B cell (primary cell): ENCODE measurements at regions of chr6 and their contacts with region 1.

Region 1: GRCh38 chr6:24494821-24495795 is at the start of gene ALDH5A1:
- DNase-seq: peak; percentile 85
- ATAC-seq: peak; percentile 67
- H3K4me3 ChIP-seq: peak within 1 kb of the TSS; percentile 41 to 82 (median 57)
- H3K4me3 Mint-ChIP-seq: peak within 1 kb of the TSS; percentile 90
- H3K27ac ChIP-seq: peak within 1 kb of the TSS; percentile 61 to 69
- H3K27ac Mint-ChIP-seq: peak within 1 kb of the TSS; percentile 94
- H3K4me1 ChIP-seq: peaks cover 17 to 18% of the 10 kb centered on the region in 2 donors
- H3K4me1 Mint-ChIP-seq: peaks cover 30% of the 10 kb centered on the region
- H3K27me3 ChIP-seq: no peaks in the 10 kb centered on the region
- H3K27me3 Mint-ChIP-seq: no peaks in the 10 kb centered on the region
- CTCF ChIP-seq: peak; percentile 46
- total RNA-seq, gene ALDH5A1: 26.3 and 28.3 TPM in 2 replicates

Region 2: GRCh38 chr6:24451581-24452388 is 43.3 kb before region 1 on chr6:
- CTCF ChIA-PET with region 1: no interaction called
- POLR2A ChIA-PET with region 1: no interaction called
- intact Hi-C with region 1: no loop called
- DNase-seq: no peak
- ATAC-seq: no peak
- H3K4me3 ChIP-seq: no peak overlapping the region
- H3K4me3 Mint-ChIP-seq: no peak overlapping the region
- H3K27ac ChIP-seq: no peak overlapping the region
- H3K27ac Mint-ChIP-seq: no peak overlapping the region
- H3K4me1 ChIP-seq: no peaks in the 10 kb centered on the region
- H3K4me1 Mint-ChIP-seq: no peaks in the 10 kb centered on the region
- H3K27me3 ChIP-seq: no peaks in the 10 kb centered on the region
- H3K27me3 Mint-ChIP-seq: no peaks in the 10 kb centered on the region
- CTCF ChIP-seq: no peak

Region 3: DNA sequence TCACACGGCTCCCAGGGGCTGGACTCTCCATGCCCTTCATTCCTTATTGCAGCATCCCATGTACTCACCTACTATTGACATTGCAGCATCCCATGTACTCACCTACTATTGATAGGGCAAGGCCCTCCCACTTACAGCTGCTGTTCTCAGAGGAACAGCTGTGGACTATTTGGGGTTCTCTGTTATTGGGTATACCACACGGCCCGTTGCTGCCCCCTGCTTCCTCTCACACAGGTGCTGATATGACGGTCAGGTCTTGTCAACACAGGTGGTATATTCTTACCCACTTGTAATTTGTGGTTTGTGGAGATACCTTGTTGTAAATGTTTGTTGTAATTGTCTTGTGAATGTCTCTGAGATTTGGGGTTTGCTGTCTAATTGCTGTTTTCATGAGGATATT is 18.5 kb after region 1 on chr6:
- CTCF ChIA-PET with region 1: interaction called, 39 read pairs
- POLR2A ChIA-PET with region 1: interaction called, 7 read pairs
- intact Hi-C with region 1: no loop called
- DNase-seq: no peak
- ATAC-seq: no peak
- H3K4me3 ChIP-seq: no peak overlapping the region
- H3K4me3 Mint-ChIP-seq: no peak overlapping the region
- H3K27ac ChIP-seq: no peak overlapping the region
- H3K27ac Mint-ChIP-seq: no peak overlapping the region
- H3K4me1 ChIP-seq: peaks cover 18 to 20% of the 10 kb centered on the region in 2 donors
- H3K4me1 Mint-ChIP-seq: peaks cover 23% of the 10 kb centered on the region
- H3K27me3 ChIP-seq: no peaks in the 10 kb centered on the region
- H3K27me3 Mint-ChIP-seq: no peaks in the 10 kb centered on the region
- CTCF ChIP-seq: no peak

Region 4: DNA sequence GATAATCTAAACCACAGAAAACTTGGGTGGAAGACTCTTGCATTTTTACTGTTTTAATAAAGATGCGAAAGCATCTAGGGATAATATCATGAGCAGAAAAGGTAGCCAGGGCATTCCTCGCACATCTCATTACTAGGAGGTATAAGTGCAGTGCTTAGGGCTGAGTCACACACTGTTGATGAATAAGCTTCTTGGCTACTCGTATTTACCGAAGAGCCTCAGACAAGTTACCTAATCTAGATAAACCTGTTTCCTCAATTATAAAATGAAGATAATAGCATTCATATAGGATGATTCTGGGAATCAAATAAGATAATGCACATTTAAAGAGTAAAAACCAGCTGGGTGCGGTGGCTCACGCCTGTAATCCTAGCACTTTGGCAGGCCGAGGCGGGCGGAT is 151.7 kb after region 1 on chr6:
- CTCF ChIA-PET with region 1: interaction called, 9 read pairs
- POLR2A ChIA-PET with region 1: no interaction called
- intact Hi-C with region 1: loop called (anchors 5 kb)
- DNase-seq: no peak
- ATAC-seq: no peak
- H3K4me3 ChIP-seq: no peak overlapping the region
- H3K4me3 Mint-ChIP-seq: peak overlapping the region; percentile 95
- H3K27ac ChIP-seq: peak overlapping the region in 1 of 2 donors; percentile 75
- H3K27ac Mint-ChIP-seq: peak overlapping the region; percentile 98
- H3K4me1 ChIP-seq: peaks cover 10 to 15% of the 10 kb centered on the region in 2 donors
- H3K4me1 Mint-ChIP-seq: peaks cover 27% of the 10 kb centered on the region
- H3K27me3 ChIP-seq: no peaks in the 10 kb centered on the region
- H3K27me3 Mint-ChIP-seq: no peaks in the 10 kb centered on the region
- CTCF ChIP-seq: no peak

Region 5: GRCh38 chr6:24666641-24667377 is 171.7 kb after region 1 on chr6 and contains the starts of genes ACOT13 and TDP2:
- CTCF ChIA-PET with region 1: interaction called, 11 read pairs
- POLR2A ChIA-PET with region 1: interaction called, 3 read pairs
- intact Hi-C with region 1: loop called (anchors 1 kb)
- DNase-seq: peak; percentile 98
- ATAC-seq: peak; percentile 94
- H3K4me3 ChIP-seq: peak within 1 kb of the TSS; percentile 74 to 100 (median 96)
- H3K4me3 Mint-ChIP-seq: peak within 1 kb of the TSS; percentile 99
- H3K27ac ChIP-seq: peak within 1 kb of the TSS; percentile 75 to 82
- H3K27ac Mint-ChIP-seq: peak within 1 kb of the TSS; percentile 98
- H3K4me1 ChIP-seq: peaks cover 22 to 23% of the 10 kb centered on the region in 2 donors
- H3K4me1 Mint-ChIP-seq: peaks cover 46% of the 10 kb centered on the region
- H3K27me3 ChIP-seq: no peaks in the 10 kb centered on the region
- H3K27me3 Mint-ChIP-seq: no peaks in the 10 kb centered on the region
- CTCF ChIP-seq: peak; percentile 67
- total RNA-seq, gene ACOT13: 5.7 and 6.6 TPM in 2 replicates
- total RNA-seq, gene TDP2: 63.5 and 68.1 TPM in 2 replicates

Region 6: DNA sequence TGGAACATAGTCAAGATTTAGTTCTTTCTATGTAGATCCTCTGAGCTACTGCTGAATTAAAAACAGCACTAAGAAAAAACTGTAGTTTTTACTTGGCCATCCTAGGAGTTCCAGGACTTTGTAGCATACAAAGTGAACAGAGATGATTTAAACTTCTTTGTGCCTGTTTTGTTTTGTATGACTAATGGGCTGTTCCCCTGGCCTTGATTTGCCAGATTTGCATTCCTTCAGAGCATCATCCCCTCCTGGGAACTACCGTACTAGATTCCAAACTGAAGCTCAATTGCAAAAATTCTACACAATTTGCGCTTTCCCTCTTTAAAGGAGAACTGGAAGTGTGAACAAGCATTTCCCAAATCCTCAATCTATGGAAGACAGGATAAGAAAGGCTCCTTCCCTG is 194.9 kb after region 1 on chr6:
- CTCF ChIA-PET with region 1: interaction called, 4 read pairs
- POLR2A ChIA-PET with region 1: no interaction called
- intact Hi-C with region 1: loop called (anchors 1 kb)
- DNase-seq: no peak
- ATAC-seq: no peak
- H3K4me3 ChIP-seq: no peak overlapping the region
- H3K4me3 Mint-ChIP-seq: no peak overlapping the region
- H3K27ac ChIP-seq: no peak overlapping the region
- H3K27ac Mint-ChIP-seq: no peak overlapping the region
- H3K4me1 ChIP-seq: no peaks in the 10 kb centered on the region
- H3K4me1 Mint-ChIP-seq: no peaks in the 10 kb centered on the region
- H3K27me3 ChIP-seq: no peaks in the 10 kb centered on the region
- H3K27me3 Mint-ChIP-seq: no peaks in the 10 kb centered on the region
- CTCF ChIP-seq: no peak

Region 7: DNA sequence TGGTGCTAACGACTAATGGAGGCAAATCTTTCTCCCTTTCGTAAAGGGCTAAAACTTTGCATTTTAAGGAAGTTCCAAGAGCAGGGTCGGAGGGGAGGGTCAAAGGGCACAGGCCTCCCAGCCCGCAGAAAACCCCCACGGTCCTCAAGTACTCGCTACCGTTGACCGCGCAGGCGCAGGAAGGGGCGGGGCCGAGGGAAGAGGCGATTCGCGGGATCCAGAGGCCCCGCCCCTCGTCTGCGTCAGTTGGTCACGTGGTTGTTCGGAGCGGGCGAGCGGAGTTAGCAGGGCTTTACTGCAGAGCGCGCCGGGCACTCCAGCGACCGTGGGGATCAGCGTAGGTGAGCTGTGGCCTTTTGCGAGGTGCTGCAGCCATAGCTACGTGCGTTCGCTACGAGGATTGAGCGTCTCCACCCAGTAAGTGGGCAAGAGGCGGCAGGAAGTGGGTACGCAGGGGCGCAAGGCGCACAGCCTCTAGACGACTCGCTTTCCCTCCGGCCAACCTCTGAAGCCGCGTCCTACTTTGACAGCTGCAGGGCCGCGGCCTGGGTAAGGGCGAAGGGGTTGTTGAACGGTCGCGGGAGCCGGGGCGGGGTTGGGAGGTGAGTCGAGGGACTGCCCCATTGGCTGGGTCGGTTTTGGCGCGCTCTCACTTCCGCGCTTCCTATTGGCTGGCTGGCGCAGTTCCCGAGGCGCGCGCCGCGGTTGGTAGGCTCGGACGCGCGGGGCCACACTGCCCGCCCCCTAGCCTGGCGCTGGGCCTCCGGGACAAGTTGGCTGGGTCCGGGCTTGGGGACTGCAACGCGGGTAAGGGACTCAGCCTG is 279.8 kb after region 1 on chr6 and contains the start of gene GMNN:
- CTCF ChIA-PET with region 1: no interaction called
- POLR2A ChIA-PET with region 1: no interaction called
- intact Hi-C with region 1: loop called (anchors 1 kb)
- DNase-seq: peak; percentile 98
- ATAC-seq: peak; percentile 90
- H3K4me3 ChIP-seq: peak within 1 kb of the TSS; percentile 93 to 100 (median 95)
- H3K4me3 Mint-ChIP-seq: peak within 1 kb of the TSS; percentile 99
- H3K27ac ChIP-seq: peak within 1 kb of the TSS; percentile 85 to 94
- H3K27ac Mint-ChIP-seq: peak within 1 kb of the TSS; percentile 97
- H3K4me1 ChIP-seq: peaks cover 14 to 21% of the 10 kb centered on the region in 2 donors
- H3K4me1 Mint-ChIP-seq: peaks cover 26% of the 10 kb centered on the region
- H3K27me3 ChIP-seq: no peaks in the 10 kb centered on the region
- H3K27me3 Mint-ChIP-seq: no peaks in the 10 kb centered on the region
- CTCF ChIP-seq: no peak
- total RNA-seq, gene GMNN: 7.3 and 8.2 TPM in 2 replicates

Region 8: GRCh38 chr6:25524542-25524941 is 1029.4 kb after region 1 on chr6:
- CTCF ChIA-PET with region 1: no interaction called
- POLR2A ChIA-PET with region 1: no interaction called
- intact Hi-C with region 1: no loop called
- DNase-seq: no peak
- ATAC-seq: no peak
- H3K4me3 ChIP-seq: no peak overlapping the region
- H3K4me3 Mint-ChIP-seq: no peak overlapping the region
- H3K27ac ChIP-seq: no peak overlapping the region
- H3K27ac Mint-ChIP-seq: no peak overlapping the region
- H3K4me1 ChIP-seq: no peaks in the 10 kb centered on the region
- H3K4me1 Mint-ChIP-seq: no peaks in the 10 kb centered on the region
- H3K27me3 ChIP-seq: no peaks in the 10 kb centered on the region
- H3K27me3 Mint-ChIP-seq: no peaks in the 10 kb centered on the region
- CTCF ChIP-seq: no peak